ENCODE measurements at regions of chr1 and their contacts with region 1.

Region 1: GRCh38 chr1:71656902-71657301 is 576.1 kb upstream of the ZRANB2 start:
- DNase-seq: no peak
- H3K4me3 Mint-ChIP-seq: no peak overlapping the region
- H3K27ac Mint-ChIP-seq: no peak overlapping the region
- H3K4me1 Mint-ChIP-seq: no peaks in the 10 kb centered on the region
- H3K27me3 Mint-ChIP-seq: no peaks in the 10 kb centered on the region

Region 2: DNA sequence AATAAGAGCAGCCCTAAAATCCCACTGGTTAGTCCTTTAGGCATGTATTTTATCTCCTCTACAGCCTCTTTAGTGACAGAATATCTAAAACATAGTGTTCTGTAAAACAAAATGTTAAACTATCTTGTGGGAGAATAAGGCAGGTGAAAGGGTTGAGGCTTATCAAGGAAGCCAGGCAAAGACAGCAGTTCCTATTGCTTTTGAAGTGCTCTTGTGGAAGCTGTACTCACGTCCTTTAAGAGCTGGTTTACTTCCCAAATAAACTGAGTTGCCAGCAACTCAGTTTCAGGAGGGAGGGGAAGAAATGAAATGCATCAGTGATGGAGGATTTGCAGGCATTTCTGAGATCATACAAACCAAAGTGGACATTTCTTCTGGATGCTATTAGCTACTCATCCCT is 46.4 kb before region 1 on chr1:
- CTCF ChIA-PET with region 1: no interaction called
- POLR2A ChIA-PET with region 1: interaction called, 13 read pairs
- DNase-seq: no peak
- H3K4me3 Mint-ChIP-seq: no peak overlapping the region
- H3K27ac Mint-ChIP-seq: no peak overlapping the region
- H3K4me1 Mint-ChIP-seq: no peaks in the 10 kb centered on the region
- H3K27me3 Mint-ChIP-seq: no peaks in the 10 kb centered on the region